ENCODE measurements at regions of chr2 and their contacts with region 1.

Region 1: GRCh38 chr2:88875736-88876135 is 184.3 kb downstream of the RPIA start:
- DNase-seq: no peak
- H3K4me3 ChIP-seq: no peak overlapping the region
- H3K27ac ChIP-seq: no peak overlapping the region
- H3K4me1 ChIP-seq: no peaks in the 10 kb centered on the region
- H3K27me3 ChIP-seq: no peaks in the 10 kb centered on the region
- CTCF ChIP-seq: no peak

Region 2: DNA sequence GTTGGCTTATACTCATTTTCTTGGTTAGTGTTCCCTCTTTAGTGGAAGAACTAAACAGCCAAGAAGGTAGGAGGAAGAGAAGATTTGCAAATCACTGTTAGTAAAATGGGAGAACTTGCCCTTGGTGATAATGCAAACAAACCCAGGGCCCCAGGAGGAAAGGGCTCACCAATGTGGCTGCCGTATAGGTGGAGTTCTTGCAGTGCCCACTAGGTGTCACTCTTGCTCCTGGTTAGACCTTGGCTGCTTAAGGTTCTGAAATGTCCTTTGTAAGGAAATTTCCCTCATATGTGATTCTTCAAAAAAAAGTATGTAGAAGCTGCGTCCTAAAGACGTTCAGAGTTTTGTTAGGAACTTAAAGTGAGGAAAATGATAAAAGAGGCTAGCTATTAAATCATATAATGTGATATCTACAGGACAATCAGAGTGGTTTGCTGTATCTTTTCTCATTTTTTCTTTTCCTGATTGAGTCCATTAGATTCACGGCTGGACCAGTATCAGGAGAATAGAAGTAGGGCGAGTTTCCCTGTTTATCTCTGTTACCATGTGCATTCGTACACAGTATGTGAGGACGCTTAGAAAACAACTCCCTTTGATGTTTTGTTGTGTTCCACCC is 135.6 kb before region 1 on chr2:
- intact Hi-C with region 1: loop called (anchors 5 kb)
- DNase-seq: peak; percentile 75
- H3K4me3 ChIP-seq: no peak overlapping the region
- H3K27ac ChIP-seq: no peak overlapping the region
- H3K4me1 ChIP-seq: no peaks in the 10 kb centered on the region
- H3K27me3 ChIP-seq: no peaks in the 10 kb centered on the region
- CTCF ChIP-seq: peak; percentile 92

Region 3: DNA sequence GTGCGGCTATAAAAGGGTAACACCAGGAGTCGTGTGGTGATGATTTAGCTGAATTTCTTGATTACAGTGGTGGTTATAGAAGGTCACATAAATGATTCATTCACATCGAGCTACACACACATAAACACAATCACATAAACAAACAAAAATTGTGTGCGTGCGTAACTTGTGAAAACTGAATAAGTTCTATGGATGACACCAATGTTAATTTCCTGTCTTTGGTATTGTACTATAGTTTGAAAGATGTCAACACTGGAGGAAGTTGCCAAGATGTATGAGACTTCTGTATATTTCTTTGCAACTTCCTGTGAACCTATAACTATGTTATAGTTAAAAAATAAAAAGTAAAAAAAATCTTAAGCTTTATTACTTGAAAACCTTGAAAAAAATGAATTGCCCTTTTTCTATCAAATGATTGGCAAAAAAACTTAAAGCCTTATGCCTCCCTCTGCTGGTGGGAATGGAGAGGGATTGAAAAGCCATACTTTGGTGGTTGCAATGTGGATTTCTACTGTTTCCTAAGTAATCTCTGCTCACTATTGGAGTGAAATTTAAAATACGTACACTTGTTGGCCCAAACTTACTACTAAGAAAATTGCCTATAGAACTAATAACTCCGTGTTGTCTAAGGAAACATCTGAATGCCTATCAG is 43.5 kb after region 1 on chr2:
- intact Hi-C with region 1: loop called (anchors 5 kb)
- DNase-seq: no peak
- H3K4me3 ChIP-seq: no peak overlapping the region
- H3K27ac ChIP-seq: no peak overlapping the region
- H3K4me1 ChIP-seq: no peaks in the 10 kb centered on the region
- H3K27me3 ChIP-seq: peaks cover 6% of the 10 kb centered on the region
- CTCF ChIP-seq: peak; percentile 28

Region 4: DNA sequence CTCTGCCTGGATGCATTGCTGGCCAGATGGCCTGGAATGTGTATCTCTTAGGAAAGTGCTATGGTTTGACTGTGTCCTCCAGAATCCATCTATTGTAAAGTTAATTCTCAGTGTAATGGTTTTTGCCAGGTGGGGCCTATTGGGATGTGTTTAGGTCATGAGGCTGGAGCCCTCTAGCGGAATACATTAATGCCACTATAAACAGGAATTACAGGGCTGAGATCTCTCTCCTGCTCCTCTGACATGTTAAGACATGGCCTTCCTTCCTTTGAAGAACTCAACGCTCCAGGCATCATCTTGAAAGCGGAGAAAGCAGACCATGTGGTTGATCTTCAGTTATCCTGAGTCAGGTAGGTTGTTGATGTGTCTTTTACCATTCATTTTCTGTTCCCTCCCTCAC is 92.1 kb after region 1 on chr2:
- intact Hi-C with region 1: no loop called
- DNase-seq: no peak
- H3K4me3 ChIP-seq: no peak overlapping the region
- H3K27ac ChIP-seq: no peak overlapping the region
- H3K4me1 ChIP-seq: no peaks in the 10 kb centered on the region
- H3K27me3 ChIP-seq: no peaks in the 10 kb centered on the region
- CTCF ChIP-seq: no peak

Measured in colonic mucosa (tissue), 4 donors.